Activated CD4-positive, alpha-beta memory T cell treated with anti-CD3 and anti-CD28 coated beads for 36 hours (primary cell): ENCODE measurements at regions of chr1 and their contacts with region 1.

Region 1: DNA sequence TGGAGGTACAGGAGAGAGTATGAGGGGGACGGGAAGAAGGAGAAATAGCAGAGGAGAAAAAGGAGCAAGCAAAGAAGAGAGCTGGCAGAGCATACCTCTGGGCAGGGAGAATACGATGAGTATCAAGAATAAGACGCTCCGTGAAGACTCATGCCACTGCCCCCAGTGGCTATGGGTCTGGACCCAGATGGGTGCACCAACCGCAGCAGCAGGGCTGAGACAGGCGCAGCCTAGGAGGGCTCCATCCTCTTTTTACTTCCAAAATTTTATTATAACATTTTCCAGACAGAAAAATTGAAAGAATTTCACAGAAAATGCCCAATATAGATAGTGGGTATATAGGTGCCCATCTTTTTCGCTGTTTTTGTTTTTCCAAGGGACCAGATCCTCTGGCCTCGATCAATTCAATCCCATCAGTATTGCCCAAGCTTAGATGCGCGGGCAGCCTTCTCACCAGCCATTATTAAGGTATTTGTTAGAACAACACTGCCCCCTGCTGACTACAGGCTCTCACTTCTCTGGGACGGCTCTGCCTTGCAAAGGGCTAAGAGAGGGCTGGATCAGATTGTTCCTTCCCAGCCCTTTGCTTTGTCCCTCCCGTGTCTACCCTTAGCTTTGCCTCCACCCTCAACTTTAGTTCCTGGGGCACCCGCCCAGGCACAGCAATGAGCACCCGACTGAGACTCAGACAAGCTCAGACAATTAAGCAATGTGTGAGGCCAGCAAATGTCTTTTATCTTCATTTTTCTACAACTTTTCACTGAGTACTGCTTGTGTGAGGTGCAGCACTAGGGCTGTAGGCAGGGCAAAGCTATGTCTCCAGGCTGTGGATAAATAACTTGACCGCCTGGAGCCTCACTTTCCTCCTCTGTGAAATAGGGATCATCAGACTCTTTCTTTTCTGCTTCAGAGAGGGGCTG is 17.5 kb upstream of the CAMK1G start:
- DNase-seq: peak; percentile 82
- H3K4me3 Mint-ChIP-seq: no peak overlapping the region
- H3K27ac Mint-ChIP-seq: no peak overlapping the region
- H3K4me1 Mint-ChIP-seq: peaks cover 28% of the 10 kb centered on the region
- H3K27me3 Mint-ChIP-seq: peaks cover 25% of the 10 kb centered on the region

Region 2: DNA sequence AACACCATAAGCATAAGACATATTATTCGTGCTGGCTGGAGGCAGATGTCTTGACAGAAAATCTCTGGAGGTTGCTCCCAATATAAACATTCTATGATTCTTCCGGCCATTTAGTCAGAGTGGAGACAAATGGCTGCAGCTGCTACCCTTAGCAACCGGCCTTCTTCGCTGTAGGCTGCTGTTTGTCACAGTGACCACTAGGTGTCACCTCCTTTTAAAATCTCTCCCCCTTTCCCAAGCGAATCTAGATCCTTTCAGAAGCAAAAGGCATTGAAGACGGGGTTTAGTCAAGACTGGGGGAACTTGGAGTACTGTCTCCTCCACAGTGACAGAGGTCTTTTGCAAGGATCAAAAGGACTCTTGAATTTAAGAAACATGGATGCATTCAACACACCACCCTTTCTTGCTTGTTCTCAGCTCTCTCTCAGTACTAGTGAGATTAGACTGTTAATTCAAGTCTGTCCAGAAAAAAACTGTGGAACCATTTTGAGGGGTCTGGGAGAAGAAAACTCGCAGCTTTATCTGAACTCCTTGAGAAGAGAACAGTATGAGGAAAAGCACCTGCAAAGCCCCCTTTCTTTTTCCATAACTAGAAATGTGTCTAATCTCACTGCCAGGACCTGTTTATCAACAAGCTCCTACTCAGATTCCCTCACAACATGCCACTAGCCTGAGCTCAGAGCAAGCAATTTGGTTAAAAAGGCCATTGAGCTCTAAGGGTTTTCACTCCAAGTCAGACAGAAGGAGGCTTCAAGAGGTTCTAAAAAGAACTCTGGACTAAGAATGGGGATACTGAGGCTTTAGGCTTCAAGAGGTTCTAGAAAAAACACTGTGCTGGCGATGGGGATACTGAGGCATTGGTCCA is 913.5 kb before region 1 on chr1:
- CTCF ChIA-PET with region 1: interaction called, 6 read pairs
- POLR2A ChIA-PET with region 1: no interaction called
- intact Hi-C with region 1: loop called (anchors 5 kb)
- DNase-seq: peak; percentile 34
- H3K4me3 Mint-ChIP-seq: no peak overlapping the region
- H3K27ac Mint-ChIP-seq: no peak overlapping the region
- H3K4me1 Mint-ChIP-seq: no peaks in the 10 kb centered on the region
- H3K27me3 Mint-ChIP-seq: peaks cover 24% of the 10 kb centered on the region

Region 3: GRCh38 chr1:209248649-209249279 is 317.3 kb before region 1 on chr1:
- CTCF ChIA-PET with region 1: interaction called, 25 read pairs
- POLR2A ChIA-PET with region 1: no interaction called
- intact Hi-C with region 1: no loop called
- DNase-seq: peak; percentile 46
- H3K4me3 Mint-ChIP-seq: no peak overlapping the region
- H3K27ac Mint-ChIP-seq: no peak overlapping the region
- H3K4me1 Mint-ChIP-seq: no peaks in the 10 kb centered on the region
- H3K27me3 Mint-ChIP-seq: no peaks in the 10 kb centered on the region

Region 4: DNA sequence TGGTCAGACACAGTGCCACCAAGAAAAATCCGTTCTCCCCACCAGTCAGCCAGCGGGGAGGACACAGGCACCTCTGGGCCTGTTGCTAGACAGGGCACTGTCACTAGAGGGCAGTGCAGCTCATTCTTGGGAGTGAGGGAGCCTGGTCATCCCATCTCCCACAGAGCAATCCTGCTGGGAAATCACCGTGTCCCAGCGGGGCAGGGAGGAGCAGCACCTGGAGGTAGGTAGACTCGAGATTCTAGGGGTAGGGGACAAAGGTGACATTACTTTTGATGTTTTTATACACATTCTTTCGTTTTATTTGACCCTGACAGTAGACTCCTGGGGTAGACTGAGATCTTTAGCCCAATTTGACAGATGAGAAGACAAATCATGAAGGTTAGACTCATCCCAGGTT is 10.8 kb after region 1 on chr1:
- CTCF ChIA-PET with region 1: interaction called, 70 read pairs
- POLR2A ChIA-PET with region 1: no interaction called
- intact Hi-C with region 1: no loop called
- DNase-seq: peak; percentile 82
- H3K4me3 Mint-ChIP-seq: no peak overlapping the region
- H3K27ac Mint-ChIP-seq: no peak overlapping the region
- H3K4me1 Mint-ChIP-seq: no peaks in the 10 kb centered on the region
- H3K27me3 Mint-ChIP-seq: peaks cover 2% of the 10 kb centered on the region

Region 5: GRCh38 chr1:209627732-209628196 is 61.7 kb after region 1 on chr1:
- CTCF ChIA-PET with region 1: interaction called, 35 read pairs
- POLR2A ChIA-PET with region 1: no interaction called
- intact Hi-C with region 1: loop called (anchors 1 kb)
- DNase-seq: peak; percentile 88
- H3K4me3 Mint-ChIP-seq: no peak overlapping the region
- H3K27ac Mint-ChIP-seq: no peak overlapping the region
- H3K4me1 Mint-ChIP-seq: peaks cover 14% of the 10 kb centered on the region
- H3K27me3 Mint-ChIP-seq: no peaks in the 10 kb centered on the region

Region 6: DNA sequence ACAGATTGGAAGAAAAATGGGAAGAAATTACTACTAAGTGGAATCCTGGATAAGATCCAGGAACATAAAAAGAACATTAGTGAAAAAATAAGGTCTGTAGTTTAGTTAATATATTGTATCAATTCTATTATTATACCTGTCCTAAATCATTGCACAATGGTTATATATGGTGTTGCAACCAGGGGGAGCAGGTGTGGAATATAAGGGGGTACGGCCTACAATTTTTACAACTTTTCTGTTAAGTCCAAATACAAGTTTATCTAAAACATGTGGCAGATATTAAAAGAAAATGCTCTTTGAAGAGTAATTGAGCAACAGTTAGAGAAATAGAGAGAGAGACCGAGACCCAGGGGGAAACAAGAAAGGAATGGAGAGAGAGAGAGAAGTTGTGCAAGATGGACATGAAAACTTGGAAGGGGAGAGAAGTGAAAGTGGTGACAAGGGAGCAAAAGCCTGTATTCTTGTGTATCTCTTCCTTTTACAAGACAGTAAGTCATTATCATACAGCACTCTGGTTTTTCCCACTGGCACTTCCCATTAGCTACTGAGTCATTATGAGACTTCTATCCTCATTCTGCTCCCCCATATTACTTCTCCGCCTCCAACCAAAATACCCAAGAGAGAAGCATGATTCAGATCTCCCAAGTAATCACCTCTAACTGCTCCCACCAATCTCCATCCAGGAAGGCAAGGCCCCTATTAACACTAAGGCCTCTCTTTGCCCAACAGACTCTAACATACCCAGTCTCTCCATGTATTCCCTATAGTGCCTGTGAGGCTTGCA is 167.6 kb after region 1 on chr1:
- CTCF ChIA-PET with region 1: interaction called, 10 read pairs
- POLR2A ChIA-PET with region 1: no interaction called
- intact Hi-C with region 1: no loop called
- DNase-seq: no peak
- H3K4me3 Mint-ChIP-seq: peak overlapping the region; percentile 54
- H3K27ac Mint-ChIP-seq: peak overlapping the region; percentile 75
- H3K4me1 Mint-ChIP-seq: peaks cover 49% of the 10 kb centered on the region
- H3K27me3 Mint-ChIP-seq: no peaks in the 10 kb centered on the region